A673 (cell line): ENCODE measurements at regions of chr11 and their contacts with region 1.

Region 1: DNA sequence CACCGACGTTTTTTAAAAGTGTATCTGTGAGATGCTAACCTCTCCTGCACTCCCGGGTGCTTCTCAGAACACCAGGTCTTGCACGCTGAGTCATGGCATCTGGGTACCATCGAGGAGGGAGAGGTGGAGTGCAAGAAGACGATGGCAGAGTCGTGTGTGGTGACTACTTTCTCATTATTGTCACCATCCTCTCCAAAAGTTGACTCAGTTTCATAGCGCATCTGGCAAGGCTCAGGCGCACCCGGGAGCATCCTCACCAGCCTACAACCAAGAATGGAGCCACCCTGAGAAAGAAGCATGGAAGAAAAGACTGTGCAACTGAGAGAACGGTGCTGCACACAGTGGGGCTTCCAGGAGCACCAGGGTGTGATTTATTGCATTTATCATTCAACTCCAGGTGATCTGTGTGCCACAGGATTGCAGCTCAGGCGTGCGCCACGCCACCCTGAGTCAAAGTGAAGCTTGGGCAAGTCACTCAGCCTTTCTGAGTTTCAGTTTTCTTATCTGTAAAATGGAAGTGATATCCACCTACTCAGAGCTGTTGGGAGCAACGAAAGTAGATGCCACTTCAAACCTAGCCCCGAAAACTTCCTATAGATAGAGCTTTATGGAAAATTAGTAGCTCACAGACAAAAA is 65.4 kb downstream of the LINC01488 start:
- DNase-seq: no peak
- H3K4me3 ChIP-seq: no peak overlapping the region
- H3K27ac ChIP-seq: no peak overlapping the region
- H3K4me1 ChIP-seq: no peaks in the 10 kb centered on the region
- H3K27me3 ChIP-seq: no peaks in the 10 kb centered on the region
- CTCF ChIP-seq: no peak

Region 2: DNA sequence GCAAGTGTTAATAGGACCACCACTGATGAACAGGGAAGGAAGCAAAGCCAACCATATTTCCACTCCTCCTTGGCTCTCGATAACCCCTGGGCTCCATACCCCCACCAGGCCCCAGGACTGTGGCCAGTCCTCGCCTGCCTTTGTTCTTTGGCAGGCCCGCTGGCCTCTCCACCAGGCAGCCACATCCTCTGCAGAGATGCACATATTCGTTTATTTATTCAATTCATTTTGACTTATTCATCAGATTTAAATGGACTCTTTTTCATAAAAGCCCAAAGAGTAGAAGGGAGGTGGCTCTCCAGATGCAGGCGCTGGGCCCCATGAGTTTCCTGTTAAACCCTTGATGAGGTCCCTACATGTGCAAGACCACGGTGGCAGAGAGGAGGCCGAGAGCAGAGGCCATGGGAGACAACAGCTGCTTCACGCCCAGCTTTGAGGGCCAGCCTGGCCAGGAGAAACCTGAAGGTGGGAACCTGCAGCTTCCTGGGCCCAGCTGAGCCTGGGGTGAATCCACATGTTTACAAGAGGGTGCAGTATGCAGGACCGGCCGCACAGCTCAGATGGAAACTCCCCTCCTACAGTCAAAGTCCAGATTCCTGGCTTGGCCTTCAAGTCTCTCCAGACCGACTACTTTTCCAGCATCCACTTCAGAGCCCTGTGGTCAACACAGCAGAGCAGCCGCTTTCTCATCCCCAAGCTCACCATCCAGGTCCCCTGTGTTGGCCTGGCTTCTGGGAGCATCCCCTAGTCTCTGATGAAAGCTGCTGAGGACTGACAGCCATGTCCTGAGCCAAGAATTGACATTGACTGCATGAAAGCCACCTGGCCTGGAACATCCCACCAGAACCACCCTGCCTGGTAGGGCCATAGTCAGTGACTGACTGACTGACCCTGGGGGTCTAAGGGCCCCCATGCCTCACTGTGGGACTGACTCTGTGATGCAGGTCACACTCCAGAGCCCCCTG is 54.4 kb after region 1 on chr11:
- CTCF ChIA-PET with region 1: no interaction called
- POLR2A ChIA-PET with region 1: interaction called, 11 read pairs
- intact Hi-C with region 1: no loop called
- DNase-seq: no peak
- H3K4me3 ChIP-seq: no peak overlapping the region
- H3K27ac ChIP-seq: peak overlapping the region; percentile 84
- H3K4me1 ChIP-seq: peaks cover 47% of the 10 kb centered on the region
- H3K27me3 ChIP-seq: no peaks in the 10 kb centered on the region
- CTCF ChIP-seq: no peak

Region 3: GRCh38 chr11:71349627-71350026 is 1802.8 kb after region 1 on chr11:
- CTCF ChIA-PET with region 1: no interaction called
- POLR2A ChIA-PET with region 1: no interaction called
- intact Hi-C with region 1: no loop called
- DNase-seq: no peak
- H3K4me3 ChIP-seq: no peak overlapping the region
- H3K27ac ChIP-seq: no peak overlapping the region
- H3K4me1 ChIP-seq: no peaks in the 10 kb centered on the region
- H3K27me3 ChIP-seq: peaks cover 4% of the 10 kb centered on the region
- CTCF ChIP-seq: no peak